Activated CD8-positive, alpha-beta memory T cell treated with anti-CD3 and anti-CD28 coated beads, Interleukin-2, amount 10 ng/mL, durations not matched to agents 7 days and 5 days (primary cell): ENCODE measurements at regions of chr10 and their contacts with region 1.

Region 1: DNA sequence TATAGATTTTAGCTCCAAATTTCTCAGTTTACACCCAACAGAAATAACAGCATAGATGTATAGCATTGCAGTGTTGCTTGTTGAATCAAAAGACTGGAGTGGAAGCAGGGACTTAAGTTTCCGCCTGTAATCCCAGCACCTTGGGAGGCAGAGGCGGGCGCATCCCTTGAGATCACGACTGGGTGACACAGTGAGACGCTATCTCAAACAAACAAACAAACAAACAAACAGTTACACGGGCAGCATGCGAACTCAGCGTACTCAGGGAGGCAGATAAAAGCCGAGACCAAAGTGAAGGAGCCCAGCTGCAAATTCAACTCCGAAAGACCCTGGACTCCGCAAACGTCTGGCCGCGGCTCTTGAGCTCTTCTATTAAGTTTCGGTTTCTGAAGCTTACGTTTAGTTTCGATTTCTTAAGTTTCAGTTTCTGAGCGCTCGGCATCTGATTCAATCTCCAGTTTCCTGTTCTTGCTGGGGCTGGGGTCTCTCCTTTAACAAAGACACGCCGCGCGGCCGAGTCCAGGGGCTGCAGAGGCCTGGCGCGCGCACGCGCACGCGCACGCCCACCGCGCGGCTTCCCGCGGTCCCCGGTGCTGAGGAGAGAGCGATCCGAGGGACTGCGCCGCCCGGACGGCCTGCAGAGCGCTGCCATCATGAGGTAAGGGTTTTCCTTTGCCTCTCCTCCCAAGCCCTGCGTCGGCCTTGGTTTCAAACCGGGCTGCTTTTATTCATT is at the start of gene IFIT5:
- DNase-seq: peak; percentile 82
- ATAC-seq: peak; percentile 82
- H3K4me3 Mint-ChIP-seq: peak within 1 kb of the TSS; percentile 89
- H3K27ac Mint-ChIP-seq: peak within 1 kb of the TSS; percentile 95
- H3K4me1 Mint-ChIP-seq: peaks cover 55% of the 10 kb centered on the region
- H3K27me3 Mint-ChIP-seq: no peaks in the 10 kb centered on the region
- total RNA-seq, gene IFIT5: 30.2 to 40.3 TPM

Region 2: DNA sequence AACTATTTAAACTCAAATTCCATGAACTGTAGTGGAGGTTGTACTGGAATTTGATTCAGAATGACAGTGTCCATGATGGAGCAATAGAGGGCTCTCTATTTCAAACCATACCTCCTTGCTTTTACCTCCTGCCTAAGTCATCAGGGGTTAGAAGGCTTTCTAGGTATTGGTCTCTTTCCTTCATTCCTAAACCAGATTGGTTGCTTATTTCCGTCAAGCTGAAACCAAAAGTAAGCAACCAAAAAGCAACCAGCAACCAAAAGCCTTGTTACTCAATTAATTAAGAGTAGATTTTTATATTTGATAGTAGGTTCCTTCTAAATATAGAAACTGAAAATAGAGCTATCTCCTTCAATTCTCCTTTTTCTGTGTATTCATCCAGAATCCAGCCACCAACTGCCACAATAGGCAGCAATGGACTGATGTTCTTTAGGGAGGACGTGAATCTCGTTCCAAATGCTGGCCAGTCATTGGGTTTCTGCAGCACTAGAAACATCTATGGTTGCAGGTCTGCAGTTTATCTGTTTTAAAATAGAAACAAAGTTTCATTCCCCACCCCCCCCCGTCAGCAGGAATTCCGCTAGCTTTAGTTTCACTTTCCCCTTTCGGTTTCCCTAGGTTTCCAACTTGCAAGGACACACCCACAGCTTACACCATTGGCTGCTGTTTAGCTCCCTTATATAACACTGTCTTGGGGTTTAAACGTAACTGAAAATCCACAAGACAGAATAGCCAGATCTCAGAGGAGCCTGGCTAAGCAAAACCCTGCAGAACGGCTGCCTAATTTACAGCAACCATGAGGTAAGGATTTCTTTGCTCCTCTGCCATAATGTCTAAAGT is 22.2 kb before region 1 on chr10 and contains the start of gene IFIT1:
- CTCF ChIA-PET with region 1: interaction called, 13 read pairs
- DNase-seq: peak; percentile 83
- ATAC-seq: peak; percentile 91
- H3K4me3 Mint-ChIP-seq: peak within 1 kb of the TSS; percentile 95
- H3K27ac Mint-ChIP-seq: peak within 1 kb of the TSS; percentile 99
- H3K4me1 Mint-ChIP-seq: peaks cover 43% of the 10 kb centered on the region
- H3K27me3 Mint-ChIP-seq: no peaks in the 10 kb centered on the region
- total RNA-seq, gene IFIT1: 45.8 to 107 TPM

Region 3: DNA sequence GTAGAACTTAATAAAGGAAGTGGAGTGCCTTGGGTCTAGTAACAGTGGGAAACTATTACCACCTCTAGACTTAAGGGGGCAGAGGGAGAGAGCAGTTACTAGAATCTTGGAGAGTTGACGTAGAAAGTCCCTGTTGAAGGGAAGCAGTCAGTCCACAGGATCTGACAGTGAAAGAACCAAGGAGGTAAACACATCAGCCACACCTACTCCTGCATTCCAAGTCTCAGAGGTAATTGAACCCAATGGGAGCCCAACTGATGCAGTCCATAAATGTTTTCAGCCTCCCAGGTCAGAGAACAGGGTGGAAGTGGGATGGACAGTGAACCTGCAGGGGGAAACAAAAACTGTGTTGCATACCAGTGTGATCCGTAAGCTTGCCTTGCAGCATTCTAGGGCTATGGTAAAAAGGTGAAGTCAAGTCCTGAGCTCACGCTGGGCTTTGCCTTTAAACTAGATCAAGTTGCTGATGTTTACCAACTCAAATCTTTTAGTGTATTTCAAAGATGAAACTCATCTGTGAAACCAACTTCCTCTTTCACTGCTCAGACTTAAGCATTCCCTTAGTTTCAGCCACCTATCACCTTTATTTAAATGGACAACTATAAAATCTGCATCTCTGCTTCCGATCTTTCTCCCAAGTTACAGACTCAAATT is 63.9 kb after region 1 on chr10:
- CTCF ChIA-PET with region 1: no interaction called
- DNase-seq: no peak
- ATAC-seq: no peak
- H3K4me3 Mint-ChIP-seq: no peak overlapping the region
- H3K27ac Mint-ChIP-seq: no peak overlapping the region
- H3K4me1 Mint-ChIP-seq: peaks cover 2% of the 10 kb centered on the region
- H3K27me3 Mint-ChIP-seq: peaks cover 40% of the 10 kb centered on the region